BJ (cell line): ENCODE measurements at regions of chr2 and their contacts with region 1.

Region 1: DNA sequence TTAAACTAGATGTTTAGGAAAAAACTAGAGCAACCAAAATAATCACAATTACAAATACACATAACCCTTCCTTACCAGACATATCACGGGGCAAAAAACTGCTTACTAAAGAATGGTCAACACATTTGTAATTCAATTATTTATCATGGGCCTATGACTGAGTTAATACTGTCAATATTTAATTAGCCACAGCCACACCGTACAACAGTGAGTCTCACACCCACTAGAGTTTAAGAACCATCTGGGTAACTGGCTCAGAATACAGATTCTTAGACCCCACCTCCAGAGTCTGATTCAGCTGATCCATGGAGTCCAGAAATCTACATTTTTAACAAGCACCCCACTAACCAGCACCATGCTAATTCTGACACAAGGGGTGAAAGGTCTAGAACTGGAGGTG is 14.8 kb downstream of the ATL2 start:
- DNase-seq: no peak
- H3K4me3 ChIP-seq: no peak overlapping the region
- H3K27me3 ChIP-seq: no peaks in the 10 kb centered on the region
- CTCF ChIP-seq: no peak

Region 2: GRCh38 chr2:37934591-37935513 is 427.4 kb before region 1 on chr2:
- CTCF ChIA-PET with region 1: no interaction called
- POLR2A ChIA-PET with region 1: no interaction called
- DNase-seq: no peak
- H3K4me3 ChIP-seq: no peak overlapping the region
- H3K27me3 ChIP-seq: no peaks in the 10 kb centered on the region
- CTCF ChIP-seq: no peak

Region 3: DNA sequence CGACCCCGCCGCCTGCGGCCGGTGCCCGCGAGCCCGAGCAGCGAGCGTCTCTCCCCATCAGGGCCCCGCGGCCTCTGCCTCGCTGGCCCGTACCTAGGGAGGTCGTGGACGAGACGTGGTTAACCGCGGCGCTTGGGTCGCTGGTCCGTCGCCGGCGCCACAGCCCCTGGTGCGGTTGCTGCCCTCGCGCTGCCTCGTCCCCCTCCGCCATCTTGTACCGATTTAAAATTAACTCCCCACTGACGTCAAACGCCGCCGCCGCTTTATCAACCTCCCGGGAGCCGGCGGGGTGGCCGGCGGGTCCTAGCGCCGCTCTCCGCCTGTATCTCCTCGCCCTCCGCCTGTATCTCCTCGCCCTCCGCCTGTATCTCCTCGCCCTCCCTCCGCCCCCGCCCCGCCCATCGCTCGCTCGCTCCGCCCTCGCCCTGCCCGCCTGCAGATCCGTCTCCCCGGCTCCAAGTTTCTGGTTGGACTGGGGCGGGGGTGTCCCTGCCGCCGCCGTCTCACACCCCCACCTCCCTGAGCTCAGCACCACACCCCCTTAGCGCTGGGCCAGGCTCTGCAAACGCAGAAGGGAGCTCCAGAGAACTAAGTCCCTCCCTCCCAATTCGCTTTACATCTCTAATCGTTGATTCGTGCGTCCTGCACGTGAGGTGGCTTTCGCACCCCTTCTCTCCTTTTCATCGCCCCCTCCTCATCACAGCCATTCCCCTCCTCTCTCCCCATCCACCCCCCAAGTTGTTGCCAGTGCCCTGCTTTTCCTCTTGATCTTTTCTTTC is 15.0 kb after region 1 on chr2 and contains the start of gene ATL2:
- CTCF ChIA-PET with region 1: interaction called, 18 read pairs
- POLR2A ChIA-PET with region 1: no interaction called
- DNase-seq: peak; percentile 66
- H3K4me3 ChIP-seq: peak within 1 kb of the TSS; percentile 64
- H3K27me3 ChIP-seq: peaks cover 3% of the 10 kb centered on the region
- CTCF ChIP-seq: no peak
- polyA plus RNA-seq, gene ATL2: 9.3 and 12.5 TPM in 2 replicates

Region 4: DNA sequence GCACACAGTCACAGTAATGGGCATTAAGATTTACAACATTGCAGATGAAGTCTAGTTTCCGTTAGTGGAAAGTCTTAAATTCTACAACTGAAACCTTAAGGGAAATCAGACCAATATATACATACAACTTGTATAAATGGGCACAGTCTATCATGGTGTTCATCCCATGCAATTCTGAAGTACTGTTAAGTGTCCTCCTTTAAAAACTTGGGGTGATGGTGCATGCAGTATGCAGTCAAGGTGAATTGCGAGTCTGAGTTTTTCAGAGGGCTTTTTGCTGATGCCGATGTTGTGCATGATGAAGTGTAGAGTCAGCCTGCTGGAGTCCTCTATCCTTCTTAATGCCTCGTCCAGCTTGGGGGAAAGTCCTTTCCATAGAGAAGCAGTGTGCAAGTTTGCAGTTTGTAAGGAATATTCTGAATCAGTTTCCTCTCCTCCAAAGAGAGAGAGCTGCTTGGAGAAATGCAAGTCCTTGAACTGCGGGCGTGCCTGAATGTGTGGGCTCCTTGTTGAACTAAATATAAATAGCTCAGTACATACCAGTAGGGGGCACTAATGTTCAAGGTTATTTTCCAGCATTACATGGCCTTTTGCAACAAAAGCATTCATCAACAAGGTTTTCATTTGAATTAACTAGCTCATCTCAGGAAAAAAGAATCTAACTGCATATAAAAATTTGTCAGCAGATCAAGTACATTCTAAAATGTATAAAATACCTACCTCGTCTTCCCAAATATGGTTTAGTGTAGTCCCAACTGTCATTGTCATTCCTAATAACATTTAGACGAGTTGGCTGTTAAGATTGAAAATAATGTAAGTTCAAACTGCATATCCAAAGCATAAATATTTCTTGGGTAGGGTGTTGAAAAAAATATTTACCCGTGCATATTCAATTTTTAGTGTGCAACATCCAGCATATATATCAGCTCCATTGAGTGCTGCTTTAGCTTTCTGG is 219.2 kb after region 1 on chr2:
- CTCF ChIA-PET with region 1: no interaction called
- POLR2A ChIA-PET with region 1: no interaction called
- DNase-seq: no peak
- H3K4me3 ChIP-seq: no peak overlapping the region
- H3K27me3 ChIP-seq: no peaks in the 10 kb centered on the region
- CTCF ChIP-seq: peak; percentile 56